H1 (cell line): ENCODE measurements at regions of chr18 and their contacts with region 1.

Region 1: GRCh38 chr18:47204908-47205522 is 28.9 kb upstream of the IER3IP1 start:
- DNase-seq: peak in 1 of 2 experiments; percentile 66
- H3K4me3 ChIP-seq: no peak overlapping the region
- H3K27ac ChIP-seq: no peak overlapping the region
- H3K4me1 ChIP-seq: peaks cover 0 to 4% (median 0%) of the 10 kb centered on the region in 4 experiments; a peak in 3 of 7 replicates
- H3K27me3 ChIP-seq: no peaks in the 10 kb centered on the region
- CTCF ChIP-seq: peak; percentile 47 to 91 (median 85)
- EP300 ChIP-seq: no peak
- POLR2A ChIP-seq: no peak
- RAD21 ChIP-seq: peak; percentile 80 to 84

Region 2: DNA sequence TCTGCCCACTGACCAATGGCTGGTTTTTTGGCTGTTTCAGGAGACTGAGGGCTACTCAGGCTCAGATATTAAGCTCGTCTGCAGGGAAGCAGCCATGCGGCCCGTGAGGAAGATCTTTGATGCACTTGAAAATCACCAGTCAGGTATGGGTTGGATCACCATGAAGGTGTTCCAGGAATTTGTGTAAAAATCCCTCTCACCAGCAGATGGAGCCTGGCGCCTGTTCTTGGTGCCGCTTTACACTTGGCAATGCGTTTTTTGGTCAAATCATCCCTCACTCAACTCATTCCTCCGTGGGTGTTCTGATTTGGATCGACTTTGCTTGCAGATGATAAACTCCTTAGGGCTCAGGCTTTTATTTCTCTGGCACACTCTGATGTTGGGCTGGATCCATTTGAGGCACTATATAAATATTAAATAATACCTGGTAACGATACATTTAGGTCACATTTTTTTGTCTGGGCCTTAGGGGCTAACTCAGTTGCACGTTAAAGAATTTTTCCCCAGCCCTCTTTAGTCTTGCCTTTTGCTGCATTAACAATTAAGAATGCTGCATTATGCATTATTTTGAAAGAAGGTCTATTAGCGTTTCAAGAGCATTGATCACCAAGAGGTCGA is 104.7 kb before region 1 on chr18:
- CTCF ChIA-PET with region 1: interaction called, 77 read pairs
- POLR2A ChIA-PET with region 1: interaction called, 6 read pairs
- DNase-seq: peak; percentile 66 to 86
- H3K4me3 ChIP-seq: no peak overlapping the region
- H3K27ac ChIP-seq: no peak overlapping the region
- H3K4me1 ChIP-seq: peaks cover 0 to 3% (median 0%) of the 10 kb centered on the region in 4 experiments; a peak in 1 of 7 replicates
- H3K27me3 ChIP-seq: no peaks in the 10 kb centered on the region
- CTCF ChIP-seq: peak; percentile 58 to 91 (median 87)
- EP300 ChIP-seq: no peak
- POLR2A ChIP-seq: no peak
- RAD21 ChIP-seq: peak; percentile 94 to 96

Region 3: DNA sequence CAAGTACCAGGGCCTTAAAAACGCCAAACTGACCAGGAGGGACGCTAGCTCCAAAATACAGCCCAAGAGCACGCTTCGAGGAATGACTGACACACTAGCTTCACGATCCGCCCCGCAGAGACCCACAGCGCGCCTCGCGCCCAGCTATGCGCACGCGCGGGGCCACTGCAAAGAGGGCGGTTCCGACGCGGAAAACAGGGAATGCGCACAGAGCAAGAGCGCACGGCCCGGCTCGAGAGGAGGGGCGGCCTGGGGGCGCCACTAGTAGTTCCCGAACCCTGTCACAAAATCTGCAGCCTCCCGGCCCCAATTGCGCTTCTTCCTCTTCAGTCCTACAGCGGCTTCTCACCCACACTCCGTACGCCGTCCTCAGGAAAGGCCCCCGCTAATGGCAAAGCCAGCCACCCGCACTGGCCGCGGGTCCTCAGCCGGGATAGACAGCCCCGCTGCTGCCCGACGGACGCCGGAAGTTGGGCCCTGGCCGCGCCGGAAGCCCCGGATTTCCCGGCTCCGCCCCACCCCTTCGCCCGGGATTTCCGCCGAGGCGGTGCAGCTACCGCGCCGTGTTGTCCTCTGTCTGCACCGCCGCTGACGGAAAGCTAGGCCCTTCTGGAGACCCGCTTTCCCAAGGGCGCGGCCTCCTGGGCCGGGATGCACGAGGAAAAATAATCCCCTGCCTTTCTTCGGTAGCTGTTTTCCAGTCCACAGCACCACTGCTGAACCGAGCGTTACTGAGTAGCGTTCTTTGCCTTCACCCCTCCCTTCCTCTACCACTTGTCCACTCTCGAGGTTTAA is 54.8 kb before region 1 on chr18 and contains the start of gene HDHD2:
- CTCF ChIA-PET with region 1: interaction called, 10 read pairs
- POLR2A ChIA-PET with region 1: interaction called, 3 read pairs
- DNase-seq: peak; percentile 21 to 93
- H3K4me3 ChIP-seq: peak within 1 kb of the TSS; percentile 70 to 91 (median 86)
- H3K27ac ChIP-seq: peak within 1 kb of the TSS; percentile 76
- H3K4me1 ChIP-seq: peaks cover 0 to 2% (median 1%) of the 10 kb centered on the region in 4 experiments; a peak in 4 of 7 replicates
- H3K27me3 ChIP-seq: no peaks in the 10 kb centered on the region
- CTCF ChIP-seq: no peak
- EP300 ChIP-seq: no peak
- POLR2A ChIP-seq: peak; percentile 57 to 88
- RAD21 ChIP-seq: no peak
- total RNA-seq, gene HDHD2: 42.7 and 44.8 TPM in 2 replicates

Region 4: GRCh38 chr18:47191961-47192360 is 13.1 kb before region 1 on chr18:
- CTCF ChIA-PET with region 1: interaction called, 19 read pairs
- POLR2A ChIA-PET with region 1: no interaction called
- DNase-seq: no peak
- H3K4me3 ChIP-seq: no peak overlapping the region
- H3K27ac ChIP-seq: no peak overlapping the region
- H3K4me1 ChIP-seq: no peaks in the 10 kb centered on the region
- H3K27me3 ChIP-seq: no peaks in the 10 kb centered on the region; a peak in 1 of 7 replicates
- CTCF ChIP-seq: peak in 1 of 3 experiments; percentile 14; a peak in 2 of 4 replicates
- EP300 ChIP-seq: no peak
- POLR2A ChIP-seq: no peak
- RAD21 ChIP-seq: peak in 1 of 2 experiments; percentile 35; a peak in 2 of 4 replicates

Region 5: GRCh38 chr18:47756364-47757016 is 551.5 kb after region 1 on chr18:
- CTCF ChIA-PET with region 1: interaction called, 11 read pairs
- POLR2A ChIA-PET with region 1: no interaction called
- DNase-seq: peak; percentile 34 to 93
- H3K4me3 ChIP-seq: no peak overlapping the region
- H3K27ac ChIP-seq: no peak overlapping the region
- H3K4me1 ChIP-seq: no peaks in the 10 kb centered on the region
- H3K27me3 ChIP-seq: no peaks in the 10 kb centered on the region
- CTCF ChIP-seq: peak; percentile 93 to 96 (median 96)
- EP300 ChIP-seq: no peak
- POLR2A ChIP-seq: no peak
- RAD21 ChIP-seq: peak; percentile 89 to 95